ENCODE measurements at regions of chr17 and their contacts with region 1.

Region 1: GRCh38 chr17:28763804-28764266 is 20.0 kb downstream of the TRAF4 start:
- DNase-seq: peak; percentile 68
- ATAC-seq: peak; percentile 41; the same call in 2 of the 3 replicates
- H3K4me3 ChIP-seq: no peak overlapping the region
- H3K27ac ChIP-seq: no peak overlapping the region
- H3K4me1 ChIP-seq: no peaks in the 10 kb centered on the region
- H3K27me3 ChIP-seq: no peaks in the 10 kb centered on the region
- CTCF ChIP-seq: peak; percentile 79
- EP300 ChIP-seq: no peak
- POLR2A ChIP-seq: no peak
- RAD21 ChIP-seq: peak; percentile 68

Region 2: GRCh38 chr17:28684963-28685362 is 78.9 kb before region 1 on chr17:
- CTCF ChIA-PET with region 1: no interaction called
- POLR2A ChIA-PET with region 1: no interaction called
- in situ Hi-C with region 1: no loop called
- intact Hi-C with region 1: no loop called
- DNase-seq: peak; percentile 65
- ATAC-seq: peak; percentile 68
- H3K4me3 ChIP-seq: no peak overlapping the region
- H3K27ac ChIP-seq: no peak overlapping the region
- H3K4me1 ChIP-seq: 0 out of 2 replicates have a peak, but pooled peaks cover 7% of the 10 kb centered on the region
- H3K27me3 ChIP-seq: no peaks in the 10 kb centered on the region
- CTCF ChIP-seq: peak; percentile 79
- EP300 ChIP-seq: no peak
- POLR2A ChIP-seq: no peak
- RAD21 ChIP-seq: 0 out of 2 replicates have a peak, but pooled peaks have one; percentile 38

Region 3: GRCh38 chr17:28842282-28843012 is 78.6 kb after region 1 on chr17 and contains the start of gene FAM222B:
- CTCF ChIA-PET with region 1: no interaction called
- POLR2A ChIA-PET with region 1: interaction called, 5 read pairs
- in situ Hi-C with region 1: no loop called
- intact Hi-C with region 1: loop called (anchors 5 kb)
- DNase-seq: peak; percentile 79
- ATAC-seq: peak; percentile 98
- H3K4me3 ChIP-seq: peak within 1 kb of the TSS; percentile 73 to 92 (median 74)
- H3K27ac ChIP-seq: peak within 1 kb of the TSS; percentile 59
- H3K4me1 ChIP-seq: peaks cover 20% of the 10 kb centered on the region
- H3K27me3 ChIP-seq: no peaks in the 10 kb centered on the region; a peak in 1 of 5 replicates
- CTCF ChIP-seq: no peak
- EP300 ChIP-seq: no peak
- POLR2A ChIP-seq: peak; percentile 58 to 79
- RAD21 ChIP-seq: no peak
- total RNA-seq, gene FAM222B: 3.5 and 4.7 TPM in 2 replicates

Region 4: GRCh38 chr17:28878981-28879380 is 115.1 kb after region 1 on chr17:
- CTCF ChIA-PET with region 1: interaction called, 20 read pairs
- POLR2A ChIA-PET with region 1: no interaction called
- in situ Hi-C with region 1: loop called (anchors 10 kb)
- intact Hi-C with region 1: loop called (anchors 1 kb)
- DNase-seq: peak; percentile 57
- ATAC-seq: peak; percentile 93
- H3K4me3 ChIP-seq: no peak overlapping the region
- H3K27ac ChIP-seq: no peak overlapping the region
- H3K4me1 ChIP-seq: no peaks in the 10 kb centered on the region
- H3K27me3 ChIP-seq: no peaks in the 10 kb centered on the region
- CTCF ChIP-seq: peak; percentile 89
- EP300 ChIP-seq: no peak
- POLR2A ChIP-seq: no peak
- RAD21 ChIP-seq: peak; percentile 74

Region 5: GRCh38 chr17:28889996-28890395 is 126.2 kb after region 1 on chr17:
- CTCF ChIA-PET with region 1: no interaction called
- POLR2A ChIA-PET with region 1: no interaction called
- in situ Hi-C with region 1: loop called (anchors 10 kb)
- intact Hi-C with region 1: loop called (anchors 5 kb)
- DNase-seq: no peak
- ATAC-seq: no peak
- H3K4me3 ChIP-seq: no peak overlapping the region
- H3K27ac ChIP-seq: no peak overlapping the region
- H3K4me1 ChIP-seq: peaks cover 17% of the 10 kb centered on the region
- H3K27me3 ChIP-seq: no peaks in the 10 kb centered on the region
- CTCF ChIP-seq: no peak
- EP300 ChIP-seq: no peak
- POLR2A ChIP-seq: no peak
- RAD21 ChIP-seq: no peak

Region 6: DNA sequence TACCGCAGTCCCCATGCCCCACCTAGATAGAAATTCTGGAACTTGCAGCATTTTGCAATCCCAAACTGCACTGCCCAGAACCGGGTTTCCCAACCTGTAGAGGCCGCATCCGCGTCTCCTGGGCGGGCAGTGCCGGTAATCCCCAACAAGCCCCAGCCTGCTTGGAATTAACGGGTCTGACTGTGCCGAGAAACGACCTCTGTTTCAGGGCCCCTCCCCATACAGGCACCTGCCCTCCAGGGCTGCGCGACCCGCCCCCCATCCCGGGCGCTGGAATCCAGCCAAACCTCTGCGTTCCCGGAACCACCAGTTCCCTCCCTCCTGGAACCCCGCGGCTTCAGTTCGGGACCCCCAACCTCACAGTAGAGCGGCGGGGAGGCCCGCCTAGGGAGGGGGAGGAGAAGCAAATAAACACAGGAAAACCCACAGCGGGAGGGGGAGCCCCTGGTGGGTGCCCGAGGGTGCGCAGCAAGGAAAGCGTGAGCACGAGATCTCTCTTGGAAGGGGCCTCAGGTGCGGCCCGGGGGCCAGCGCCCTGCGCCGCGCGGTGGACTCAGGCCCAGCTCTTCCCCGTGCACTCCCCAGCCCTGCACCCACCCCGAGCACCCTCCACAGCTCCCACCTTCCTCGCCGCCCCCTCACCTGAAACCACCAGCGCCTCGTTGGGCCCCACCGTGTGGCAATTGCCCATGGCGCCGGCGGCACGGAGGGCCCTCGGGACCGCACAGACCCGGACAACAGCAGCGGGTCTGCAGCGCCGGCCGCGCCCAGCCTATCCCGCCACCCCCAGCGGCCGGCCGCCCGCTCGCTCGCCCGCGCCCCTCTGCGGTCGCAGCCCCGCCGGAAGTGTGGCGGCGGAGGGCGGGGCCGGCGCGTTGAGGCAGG is 133.3 kb after region 1 on chr17 and contains the start of gene FLOT2:
- CTCF ChIA-PET with region 1: interaction called, 8 read pairs
- POLR2A ChIA-PET with region 1: no interaction called
- in situ Hi-C with region 1: no loop called
- intact Hi-C with region 1: loop called (anchors 5 kb)
- DNase-seq: peak; percentile 54
- ATAC-seq: peak; percentile 86
- H3K4me3 ChIP-seq: peak within 1 kb of the TSS; percentile 76 to 93 (median 89)
- H3K27ac ChIP-seq: peak within 1 kb of the TSS; percentile 84
- H3K4me1 ChIP-seq: peaks cover 53% of the 10 kb centered on the region
- H3K27me3 ChIP-seq: no peaks in the 10 kb centered on the region; a peak in 1 of 5 replicates
- CTCF ChIP-seq: peak; percentile 50
- EP300 ChIP-seq: 0 out of 4 replicates have a peak, but pooled peaks of 1 of the 2 experiments have one; percentile 11
- POLR2A ChIP-seq: peak; percentile 40 to 83
- RAD21 ChIP-seq: peak; percentile 49; the same call in 1 of the 2 replicates
- total RNA-seq, gene FLOT2: 54.3 and 60.7 TPM in 2 replicates

Region 7: GRCh38 chr17:28916302-28916934 is 152.6 kb after region 1 on chr17:
- CTCF ChIA-PET with region 1: interaction called, 5 read pairs
- POLR2A ChIA-PET with region 1: no interaction called
- in situ Hi-C with region 1: no loop called
- intact Hi-C with region 1: loop called (anchors 2 kb)
- DNase-seq: peak; percentile 38
- ATAC-seq: peak; percentile 78
- H3K4me3 ChIP-seq: no peak overlapping the region
- H3K27ac ChIP-seq: no peak overlapping the region
- H3K4me1 ChIP-seq: peaks cover 19% of the 10 kb centered on the region
- H3K27me3 ChIP-seq: no peaks in the 10 kb centered on the region
- CTCF ChIP-seq: peak; percentile 79
- EP300 ChIP-seq: no peak
- POLR2A ChIP-seq: no peak
- RAD21 ChIP-seq: no peak

Measured in HepG2 (cell line).